ENCODE measurements at regions of chr17 and their contacts with region 1.

Region 1: DNA sequence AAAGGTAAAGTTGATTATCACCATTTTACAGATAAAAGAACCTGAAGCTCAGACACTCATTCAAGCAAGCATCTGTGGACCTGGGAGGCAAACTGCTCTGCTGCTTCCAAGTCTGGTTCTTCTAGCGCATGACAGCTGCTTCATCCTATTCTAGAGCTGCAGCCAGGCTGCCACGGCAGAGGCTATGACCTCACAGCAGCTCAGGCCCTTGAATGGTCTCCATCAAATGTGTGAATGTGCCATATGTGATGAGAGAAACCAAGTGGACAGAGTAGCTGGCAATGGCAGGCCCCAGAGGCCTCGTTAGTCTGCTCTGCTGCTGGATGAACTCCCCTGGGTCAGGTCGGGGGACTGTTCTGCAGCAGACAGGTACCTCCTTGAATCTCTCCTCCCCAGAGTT is 30.7 kb upstream of the FOXJ1 start:
- DNase-seq: no peak
- H3K4me3 ChIP-seq: no peak overlapping the region
- H3K27ac ChIP-seq: no peak overlapping the region
- H3K4me1 ChIP-seq: no peaks in the 10 kb centered on the region
- H3K27me3 ChIP-seq: no peaks in the 10 kb centered on the region
- CTCF ChIP-seq: no peak

Region 2: DNA sequence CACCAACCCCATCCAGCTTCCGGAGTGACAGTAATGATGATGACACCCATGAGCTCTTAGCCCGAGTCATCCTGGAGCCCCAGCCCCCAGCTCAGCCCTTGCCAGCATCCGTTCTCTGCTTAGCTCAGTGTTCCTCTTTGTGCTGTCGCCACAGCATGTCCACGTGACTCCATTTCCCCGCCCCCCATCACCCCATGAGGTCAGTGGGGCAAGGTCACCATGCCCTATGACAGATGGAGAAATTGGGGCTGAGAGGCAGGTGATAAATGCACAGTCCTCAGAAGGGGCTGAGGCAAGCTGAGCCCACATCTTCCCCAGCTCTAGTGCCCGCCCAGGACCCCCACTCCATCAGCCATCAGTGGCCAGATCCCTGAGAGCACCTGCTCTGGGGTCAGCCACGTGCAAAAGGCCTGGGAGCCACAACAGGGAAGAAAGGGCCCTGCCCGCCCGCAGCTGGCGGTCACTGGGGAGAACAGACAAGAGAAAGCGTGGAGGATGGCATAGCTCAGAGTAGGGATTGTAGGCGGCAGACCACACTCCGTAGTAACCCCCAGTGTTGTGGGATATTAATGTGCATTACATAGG is 433.4 kb before region 1 on chr17:
- CTCF ChIA-PET with region 1: no interaction called
- POLR2A ChIA-PET with region 1: no interaction called
- intact Hi-C with region 1: no loop called
- DNase-seq: no peak
- H3K4me3 ChIP-seq: no peak overlapping the region
- H3K27ac ChIP-seq: no peak overlapping the region
- H3K4me1 ChIP-seq: no peaks in the 10 kb centered on the region
- H3K27me3 ChIP-seq: no peaks in the 10 kb centered on the region
- CTCF ChIP-seq: no peak

Region 3: DNA sequence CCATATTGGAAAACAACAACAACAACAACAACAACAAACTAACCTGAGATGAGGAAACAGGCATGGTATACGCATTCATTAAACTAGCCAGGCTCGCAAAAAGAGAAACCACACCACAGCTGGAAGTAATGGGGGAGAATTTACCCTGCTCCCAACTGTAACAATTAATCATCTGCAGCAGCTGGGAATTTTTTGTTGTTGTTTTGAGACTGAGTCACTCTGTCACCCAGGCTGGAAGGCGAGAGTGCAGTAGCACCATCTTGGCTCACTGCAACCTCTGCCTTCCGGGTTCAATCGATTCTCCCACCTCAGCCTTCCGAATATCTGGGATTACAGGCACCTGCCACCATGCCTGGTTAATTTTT is 165.7 kb after region 1 on chr17:
- CTCF ChIA-PET with region 1: no interaction called
- POLR2A ChIA-PET with region 1: no interaction called
- intact Hi-C with region 1: no loop called
- DNase-seq: no peak
- H3K4me3 ChIP-seq: no peak overlapping the region
- H3K27ac ChIP-seq: no peak overlapping the region
- H3K4me1 ChIP-seq: no peaks in the 10 kb centered on the region
- H3K27me3 ChIP-seq: no peaks in the 10 kb centered on the region
- CTCF ChIP-seq: no peak

Region 4: DNA sequence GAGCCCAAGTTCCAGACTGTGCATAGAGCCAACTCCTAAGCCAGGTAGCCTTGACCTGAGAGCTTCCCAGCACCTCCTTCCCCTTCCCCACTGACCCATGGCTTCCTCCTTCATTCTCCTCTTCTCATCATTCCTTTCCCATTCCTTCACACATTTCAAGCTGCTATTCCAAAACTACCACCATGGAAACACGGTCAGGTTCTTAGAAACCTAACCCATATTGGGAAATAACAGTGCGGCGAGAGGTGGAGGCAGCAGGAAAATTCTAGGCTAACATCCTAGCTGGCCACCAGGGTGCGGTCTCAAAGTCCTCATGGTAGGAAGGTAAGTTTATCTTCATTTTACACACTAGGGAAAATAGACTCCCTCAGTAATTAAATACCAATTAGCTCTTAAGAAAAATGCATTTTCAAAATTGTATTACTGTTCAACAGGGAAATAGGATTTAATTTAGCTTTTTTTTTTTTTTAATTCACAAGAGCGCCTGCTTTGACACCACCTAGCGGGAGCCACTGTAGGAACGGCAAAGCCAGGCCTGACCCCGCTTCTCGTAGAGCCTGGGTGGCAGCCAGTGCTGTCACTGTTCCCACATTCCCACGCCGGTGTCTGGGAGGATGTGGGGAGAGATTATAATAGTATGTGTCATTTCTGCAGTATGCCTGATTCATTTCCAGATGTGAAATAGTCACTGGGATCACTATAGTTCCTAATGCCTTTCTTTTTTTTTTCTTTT is 198.7 kb after region 1 on chr17:
- CTCF ChIA-PET with region 1: interaction called, 10 read pairs
- POLR2A ChIA-PET with region 1: no interaction called
- intact Hi-C with region 1: no loop called
- DNase-seq: peak; percentile 37
- H3K4me3 ChIP-seq: no peak overlapping the region
- H3K27ac ChIP-seq: no peak overlapping the region
- H3K4me1 ChIP-seq: no peaks in the 10 kb centered on the region
- H3K27me3 ChIP-seq: no peaks in the 10 kb centered on the region
- CTCF ChIP-seq: peak; percentile 58

Measured in A673 (cell line).